HCT116 (cell line): ENCODE measurements at regions of chr1 and their contacts with region 1.

Region 1: GRCh38 chr1:212477014-212477679 is 44.4 kb downstream of the NENF start:
- DNase-seq: peak; percentile 81
- ATAC-seq: peak; percentile 98
- H3K4me3 ChIP-seq: no peak overlapping the region
- H3K27ac ChIP-seq: no peak overlapping the region
- H3K4me1 ChIP-seq: peaks cover 0 to 17% of the 10 kb centered on the region in 2 experiments; a peak in 2 of 4 replicates
- H3K27me3 ChIP-seq: no peaks in the 10 kb centered on the region
- CTCF ChIP-seq: peak; percentile 89 to 96 (median 91)
- POLR2A ChIP-seq: no peak
- RAD21 ChIP-seq: peak; percentile 98

Region 2: DNA sequence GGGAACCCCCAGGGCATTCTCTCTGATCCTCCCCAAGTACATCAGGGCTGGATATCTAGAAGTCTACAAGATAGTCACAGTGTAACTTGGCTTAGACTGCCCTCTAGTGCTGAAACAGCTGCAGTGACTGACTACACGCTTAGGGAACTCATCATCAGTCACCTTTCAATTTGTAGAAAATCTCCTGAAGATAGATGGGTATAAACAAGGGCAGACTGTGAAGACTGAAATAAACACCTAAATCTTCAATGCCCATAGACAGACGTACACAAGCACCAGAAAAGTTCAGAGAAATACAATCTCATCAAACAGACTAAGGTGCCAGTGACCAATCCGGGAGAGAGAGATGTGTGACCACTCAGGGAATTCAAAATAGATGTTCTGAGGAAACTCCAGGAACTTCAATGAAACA is 109.1 kb before region 1 on chr1:
- CTCF ChIA-PET with region 1: no interaction called
- POLR2A ChIA-PET with region 1: no interaction called
- RAD21 ChIA-PET with region 1: no interaction called
- intact Hi-C with region 1: no loop called
- DNase-seq: peak; percentile 66
- ATAC-seq: peak; percentile 98
- H3K4me3 ChIP-seq: no peak overlapping the region
- H3K27ac ChIP-seq: no peak overlapping the region
- H3K4me1 ChIP-seq: no peaks in the 10 kb centered on the region
- H3K27me3 ChIP-seq: no peaks in the 10 kb centered on the region
- CTCF ChIP-seq: peak; percentile 76 to 96 (median 92); a peak in 5 of 6 replicates
- POLR2A ChIP-seq: no peak
- RAD21 ChIP-seq: peak; percentile 92

Region 3: GRCh38 chr1:212595787-212596714 is 118.9 kb after region 1 on chr1:
- CTCF ChIA-PET with region 1: interaction called, 10 read pairs
- POLR2A ChIA-PET with region 1: interaction called, 4 read pairs
- RAD21 ChIA-PET with region 1: interaction called in 1 of 2 experiments, 4 read pairs
- intact Hi-C with region 1: loop called (anchors 1 kb)
- DNase-seq: peak; percentile 68
- ATAC-seq: peak; percentile 82
- H3K4me3 ChIP-seq: peak overlapping the region in 1 of 2 experiments; percentile 36; a peak in 3 of 4 replicates
- H3K27ac ChIP-seq: peak overlapping the region; percentile 72
- H3K4me1 ChIP-seq: peaks cover 18 to 44% of the 10 kb centered on the region in 2 experiments
- H3K27me3 ChIP-seq: no peaks in the 10 kb centered on the region
- CTCF ChIP-seq: peak; percentile 50 to 86 (median 84); a peak in 5 of 6 replicates
- POLR2A ChIP-seq: no peak
- RAD21 ChIP-seq: peak; percentile 67

Region 4: DNA sequence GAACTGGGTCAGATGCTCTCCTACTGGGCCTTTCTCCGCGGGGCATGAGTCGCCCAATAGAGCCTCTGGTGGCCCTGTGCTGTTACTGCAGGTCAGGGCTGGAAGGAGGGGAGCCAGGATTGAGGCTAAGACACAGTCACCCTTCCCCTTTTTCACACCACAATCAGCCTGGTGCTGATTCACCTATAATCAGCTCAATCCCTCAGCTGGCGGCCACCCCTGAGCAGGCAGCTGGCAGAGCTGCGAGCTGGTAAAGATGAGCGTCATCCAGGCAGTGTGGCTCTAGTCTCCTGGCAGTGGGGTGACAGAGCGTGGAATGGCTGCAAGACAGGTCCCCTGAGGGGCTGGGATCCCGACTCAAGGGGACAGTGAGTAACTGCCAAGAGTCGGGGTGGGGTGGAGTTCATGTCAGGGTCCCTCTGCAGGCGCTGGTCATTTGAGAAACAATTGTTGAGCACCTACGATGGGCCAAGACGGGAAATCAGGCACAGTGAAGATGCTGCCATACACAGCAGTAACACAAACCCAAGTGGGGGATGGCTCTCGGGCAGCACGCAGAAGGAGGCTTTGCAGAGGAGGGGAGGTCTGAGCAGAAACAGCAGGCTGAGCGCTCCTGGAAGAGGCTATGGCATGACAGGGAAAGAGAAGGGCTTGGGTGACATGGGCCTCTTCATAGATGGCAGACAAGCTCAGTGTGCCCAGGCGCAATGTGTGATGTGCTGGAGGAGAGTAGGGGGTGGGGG is 153.2 kb after region 1 on chr1:
- CTCF ChIA-PET with region 1: no interaction called
- POLR2A ChIA-PET with region 1: no interaction called
- RAD21 ChIA-PET with region 1: interaction called in 1 of 2 experiments, 4 read pairs
- intact Hi-C with region 1: loop called (anchors 1 kb)
- DNase-seq: peak; percentile 34
- ATAC-seq: peak; percentile 99
- H3K4me3 ChIP-seq: no peak overlapping the region
- H3K27ac ChIP-seq: no peak overlapping the region
- H3K4me1 ChIP-seq: peaks cover 0 to 14% of the 10 kb centered on the region in 2 experiments; a peak in 1 of 4 replicates
- H3K27me3 ChIP-seq: no peaks in the 10 kb centered on the region
- CTCF ChIP-seq: peak; percentile 56 to 95 (median 80)
- POLR2A ChIP-seq: no peak
- RAD21 ChIP-seq: peak; percentile 69

Region 5: DNA sequence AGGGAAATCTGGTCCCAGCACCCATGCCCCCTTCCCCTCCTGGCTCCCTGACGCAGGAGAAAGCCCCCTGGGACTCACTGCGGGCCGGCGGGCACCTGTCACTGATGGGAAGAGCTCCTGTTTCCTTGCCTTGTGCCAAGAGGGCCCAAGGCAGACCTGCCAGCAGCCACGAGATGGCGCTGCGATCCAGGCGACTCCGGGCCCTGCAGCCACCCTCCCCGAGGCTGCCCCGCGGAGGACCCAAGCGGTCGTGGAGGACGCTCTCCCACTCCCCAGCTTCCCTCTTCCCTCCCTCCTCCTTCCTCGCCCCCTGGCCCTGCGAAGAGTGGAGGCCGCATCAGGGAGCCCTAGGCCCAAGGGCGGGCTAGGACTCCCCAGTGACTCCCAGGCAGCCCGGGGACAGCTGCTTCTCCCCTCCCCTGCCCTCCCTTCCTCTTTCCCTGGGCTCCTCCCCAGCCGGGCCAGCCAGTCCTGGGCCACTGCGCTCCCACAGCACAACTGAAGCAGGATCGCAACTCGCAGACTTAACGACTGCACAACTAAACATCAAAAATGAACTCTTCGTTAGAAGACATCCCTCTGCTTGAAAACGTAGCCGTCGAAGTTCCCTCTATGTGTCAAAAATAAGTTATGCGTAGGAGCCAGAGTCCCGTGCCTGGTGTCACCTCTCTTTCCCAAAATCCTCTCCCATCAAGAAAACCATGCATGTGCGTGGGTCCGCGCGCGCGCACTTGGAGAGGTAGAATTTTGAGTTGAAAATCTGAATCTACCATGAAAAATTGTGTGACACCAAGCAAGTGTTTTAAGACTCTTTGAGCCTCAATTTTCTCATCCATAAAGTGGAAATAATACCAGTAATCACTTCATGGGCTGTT is 188.3 kb after region 1 on chr1:
- CTCF ChIA-PET with region 1: interaction called, 15 read pairs
- POLR2A ChIA-PET with region 1: no interaction called
- RAD21 ChIA-PET with region 1: interaction called, 4 to 8 read pairs
- intact Hi-C with region 1: no loop called
- DNase-seq: peak; percentile 68
- ATAC-seq: peak; percentile 98
- H3K4me3 ChIP-seq: peak overlapping the region; percentile 53 to 64
- H3K27ac ChIP-seq: no peak overlapping the region; the same call in 1 of the 2 replicates
- H3K4me1 ChIP-seq: peaks cover 7 to 20% of the 10 kb centered on the region in 2 experiments; a peak in 3 of 4 replicates
- H3K27me3 ChIP-seq: no peaks in the 10 kb centered on the region
- CTCF ChIP-seq: peak; percentile 84 to 96 (median 84)
- POLR2A ChIP-seq: no peak
- RAD21 ChIP-seq: peak; percentile 95